ENCODE measurements at regions of chr16 and their contacts with region 1.

Region 1: DNA sequence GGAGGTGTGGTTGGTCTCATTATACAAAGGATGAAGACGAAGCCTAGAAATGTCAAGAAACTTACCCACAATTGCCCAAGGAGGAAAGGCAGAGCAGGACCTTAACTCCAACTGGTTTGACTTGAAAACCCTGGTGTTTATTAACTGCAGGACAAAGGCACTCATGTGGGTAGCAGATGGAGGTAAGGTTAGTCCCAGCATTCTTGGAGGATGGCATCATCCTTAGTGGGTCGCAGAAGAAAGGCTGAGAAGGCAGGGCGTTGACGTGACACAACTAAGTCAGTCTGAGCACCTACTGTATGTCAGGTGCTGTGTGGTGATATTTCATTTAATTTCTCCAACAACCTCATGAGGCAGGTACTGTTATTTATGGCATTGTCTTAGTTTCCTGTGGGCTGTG is 101.3 kb downstream of the HAPSTR1 start:
- DNase-seq: no peak
- ATAC-seq: no peak
- H3K4me3 ChIP-seq: no peak overlapping the region
- H3K27ac ChIP-seq: no peak overlapping the region
- H3K4me1 ChIP-seq: peaks cover 0 to 7% (median 0%) of the 10 kb centered on the region in 9 donors
- H3K27me3 ChIP-seq: no peaks in the 10 kb centered on the region
- CTCF ChIP-seq: no peak

Region 2: GRCh38 chr16:9033125-9033830 is 159.5 kb before region 1 on chr16:
- intact Hi-C with region 1: loop called in 1 of 10 experiments (anchors 5 kb)
- DNase-seq: no peak
- ATAC-seq: no peak
- H3K4me3 ChIP-seq: no peak overlapping the region
- H3K27ac ChIP-seq: no peak overlapping the region
- H3K4me1 ChIP-seq: no peaks in the 10 kb centered on the region
- H3K27me3 ChIP-seq: no peaks in the 10 kb centered on the region
- CTCF ChIP-seq: peak; percentile 9 to 53 (median 40)

Region 3: DNA sequence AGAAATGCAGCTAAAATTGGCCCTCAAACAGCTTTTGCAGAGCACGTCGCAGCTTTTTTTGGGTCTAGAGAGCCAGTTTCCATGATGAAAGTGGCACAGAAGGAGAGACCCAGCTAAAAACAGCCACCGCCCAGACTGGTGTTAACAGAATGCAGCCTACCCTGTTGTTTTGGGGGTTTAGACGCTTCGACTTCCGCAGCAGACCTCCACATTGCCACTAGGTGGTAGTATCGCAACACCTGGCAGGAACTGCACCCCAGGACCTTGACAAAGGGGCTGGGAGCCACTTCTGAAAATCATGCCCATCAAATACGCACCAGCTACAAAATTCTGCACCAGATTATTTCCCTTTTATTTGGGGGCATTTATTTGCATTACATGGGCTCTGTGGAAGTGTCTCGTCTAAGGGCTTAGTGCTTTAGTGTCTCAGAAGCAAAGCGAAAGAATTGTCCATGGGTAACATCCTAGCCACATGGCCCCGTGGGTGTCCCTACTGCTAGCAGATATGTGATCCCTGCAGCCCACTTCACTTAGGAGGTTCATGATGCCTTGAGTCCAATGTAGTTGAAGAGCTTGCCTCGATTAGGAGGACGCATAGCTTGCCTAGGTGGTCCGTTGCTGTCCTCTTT is 65.8 kb after region 1 on chr16:
- intact Hi-C with region 1: no loop called
- DNase-seq: peak; percentile 13 to 17
- ATAC-seq: peak in 3 of 8 donors; percentile 49 to 66 (median 65)
- H3K4me3 ChIP-seq: no peak overlapping the region
- H3K27ac ChIP-seq: no peak overlapping the region
- H3K4me1 ChIP-seq: peaks cover 0 to 7% (median 0%) of the 10 kb centered on the region in 9 donors
- H3K27me3 ChIP-seq: peaks cover 0 to 21% (median 0%) of the 10 kb centered on the region in 7 donors
- CTCF ChIP-seq: peak; percentile 57 to 78 (median 70)

Region 4: DNA sequence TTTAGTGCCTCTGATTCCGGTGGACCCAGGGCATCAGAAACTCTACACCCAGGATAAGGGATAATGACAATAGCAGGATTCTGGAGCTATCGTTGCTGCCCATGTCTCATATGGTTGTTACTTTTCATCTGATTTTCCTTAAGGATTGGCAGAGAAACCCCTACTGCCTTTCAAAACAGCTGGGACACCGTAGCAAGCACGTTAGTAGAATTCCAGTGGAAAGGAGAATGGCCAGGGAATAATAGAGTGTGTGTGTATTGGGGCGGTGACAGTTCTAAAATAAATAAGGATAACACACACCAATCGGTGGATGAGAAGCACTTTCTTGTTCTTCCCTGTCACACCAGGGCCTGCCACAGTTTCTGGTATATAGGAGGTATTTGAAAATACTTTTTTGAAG is 150.5 kb after region 1 on chr16:
- intact Hi-C with region 1: no loop called
- DNase-seq: no peak
- ATAC-seq: no peak
- H3K4me3 ChIP-seq: no peak overlapping the region
- H3K27ac ChIP-seq: no peak overlapping the region
- H3K4me1 ChIP-seq: peaks cover 0 to 5% (median 0%) of the 10 kb centered on the region in 9 donors
- H3K27me3 ChIP-seq: no peaks in the 10 kb centered on the region
- CTCF ChIP-seq: no peak